ENCODE measurements at regions of chr20 and their contacts with region 1.

Region 1: DNA sequence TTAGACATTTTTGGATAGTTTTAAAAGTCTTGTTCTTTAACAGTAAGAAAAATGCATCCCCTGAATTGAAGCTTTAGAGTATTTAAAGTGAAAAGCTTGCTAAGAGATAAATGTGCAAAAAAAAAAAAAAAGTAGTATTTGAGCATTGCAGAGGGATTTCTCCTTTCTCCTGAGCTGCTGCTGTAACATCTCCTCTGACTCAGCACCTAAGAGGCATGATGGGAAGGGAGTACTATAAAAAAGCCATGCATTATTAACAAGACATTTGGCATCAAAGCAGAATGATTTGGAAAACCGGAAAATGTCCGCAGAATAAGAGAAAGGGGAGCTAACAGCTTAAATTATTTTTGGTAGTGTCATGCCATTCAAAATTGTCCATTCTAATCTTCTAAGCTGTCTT is 27.9 kb downstream of the B4GALT5 start:
- DNase-seq: no peak
- H3K4me3 ChIP-seq: no peak overlapping the region
- H3K27ac ChIP-seq: peak overlapping the region; percentile 91
- H3K4me1 ChIP-seq: peaks cover 98% of the 10 kb centered on the region
- H3K27me3 ChIP-seq: no peaks in the 10 kb centered on the region
- CTCF ChIP-seq: no peak

Region 2: GRCh38 chr20:49729721-49730138 is 43.9 kb after region 1 on chr20:
- CTCF ChIA-PET with region 1: interaction called, 27 read pairs
- POLR2A ChIA-PET with region 1: no interaction called
- intact Hi-C with region 1: no loop called
- DNase-seq: peak in 1 of 2 experiments; percentile 84
- H3K4me3 ChIP-seq: no peak overlapping the region
- H3K27ac ChIP-seq: peak overlapping the region; percentile 94
- H3K4me1 ChIP-seq: peaks cover 64% of the 10 kb centered on the region
- H3K27me3 ChIP-seq: no peaks in the 10 kb centered on the region
- CTCF ChIP-seq: no peak